ENCODE measurements at regions of chr1 and their contacts with region 1.

Region 1: DNA sequence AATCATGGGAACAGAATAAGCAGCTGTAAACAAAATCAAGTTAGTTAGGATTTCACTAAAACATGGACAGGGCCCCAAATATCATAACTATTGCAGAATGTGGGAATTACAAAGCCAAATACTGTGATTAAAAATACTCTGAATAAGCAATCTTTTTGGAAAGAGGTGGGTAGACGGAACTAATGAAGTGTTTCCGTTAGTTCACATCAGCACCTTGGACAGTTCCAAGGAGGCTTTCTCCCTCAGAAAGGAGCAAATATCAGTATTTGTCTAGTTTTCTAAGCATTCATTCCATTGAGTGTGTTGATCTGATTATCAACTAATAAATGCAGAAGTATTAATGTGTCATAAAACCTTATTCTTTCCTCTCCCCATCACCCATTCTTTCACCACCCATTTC is 97.4 kb downstream of the FAM78B start:
- DNase-seq: no peak
- H3K4me3 ChIP-seq: no peak overlapping the region
- H3K27ac ChIP-seq: no peak overlapping the region
- H3K4me1 ChIP-seq: no peaks in the 10 kb centered on the region
- H3K27me3 ChIP-seq: no peaks in the 10 kb centered on the region
- CTCF ChIP-seq: no peak
- POLR2A ChIP-seq: no peak

Region 2: GRCh38 chr1:165610885-165611284 is 458.5 kb before region 1 on chr1:
- intact Hi-C with region 1: no loop called
- DNase-seq: no peak
- H3K4me3 ChIP-seq: no peak overlapping the region
- H3K27ac ChIP-seq: no peak overlapping the region
- H3K4me1 ChIP-seq: no peaks in the 10 kb centered on the region
- H3K27me3 ChIP-seq: no peaks in the 10 kb centered on the region
- CTCF ChIP-seq: no peak
- POLR2A ChIP-seq: no peak

Region 3: DNA sequence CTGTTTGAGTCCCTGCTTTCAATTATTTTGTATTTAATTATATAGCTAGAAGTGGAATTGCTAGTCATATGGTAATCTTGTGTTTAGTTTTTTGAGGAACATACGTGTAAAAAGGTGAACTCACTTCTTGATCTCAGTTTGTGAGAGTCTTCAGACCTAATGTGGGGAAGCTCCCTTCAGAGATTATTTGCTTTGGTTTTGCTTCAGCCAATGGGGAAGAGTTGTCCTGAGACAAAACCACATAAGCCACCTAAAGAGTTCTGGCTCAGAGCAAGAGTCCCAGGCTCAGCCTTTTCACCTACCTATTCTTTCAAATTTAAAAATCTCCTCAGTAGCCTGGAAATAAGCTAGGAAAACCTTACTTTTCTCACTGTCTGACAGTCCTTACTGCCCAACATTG is 103.5 kb before region 1 on chr1:
- intact Hi-C with region 1: no loop called
- DNase-seq: no peak
- H3K4me3 ChIP-seq: no peak overlapping the region
- H3K27ac ChIP-seq: no peak overlapping the region
- H3K4me1 ChIP-seq: no peaks in the 10 kb centered on the region
- H3K27me3 ChIP-seq: no peaks in the 10 kb centered on the region
- CTCF ChIP-seq: no peak
- POLR2A ChIP-seq: no peak

Region 4: GRCh38 chr1:166040202-166040997 is 29.0 kb before region 1 on chr1:
- intact Hi-C with region 1: no loop called
- DNase-seq: no peak
- H3K4me3 ChIP-seq: no peak overlapping the region
- H3K27ac ChIP-seq: no peak overlapping the region
- H3K4me1 ChIP-seq: no peaks in the 10 kb centered on the region
- H3K27me3 ChIP-seq: no peaks in the 10 kb centered on the region
- CTCF ChIP-seq: no peak
- POLR2A ChIP-seq: no peak

Region 5: DNA sequence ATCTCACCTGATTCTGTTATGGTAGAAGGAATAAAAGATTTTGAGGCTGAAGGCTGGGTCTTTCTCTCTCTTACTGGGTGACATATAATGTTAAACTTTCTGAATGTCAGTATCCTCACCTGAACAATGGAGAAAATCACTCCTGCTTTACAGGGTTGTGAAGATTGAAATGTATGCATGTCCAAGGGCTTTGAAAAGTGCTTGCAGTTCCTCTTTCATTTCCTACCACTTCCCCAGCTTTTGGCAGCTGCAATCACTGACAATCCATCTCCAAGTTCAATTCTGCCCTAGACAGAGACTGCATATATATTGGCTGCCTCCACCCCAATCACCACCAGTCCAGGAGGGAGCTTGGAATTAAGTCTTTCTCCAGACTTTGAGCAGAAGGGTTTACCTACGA is 57.6 kb after region 1 on chr1:
- intact Hi-C with region 1: loop called (anchors 10 kb)
- DNase-seq: no peak
- H3K4me3 ChIP-seq: no peak overlapping the region
- H3K27ac ChIP-seq: no peak overlapping the region
- H3K4me1 ChIP-seq: no peaks in the 10 kb centered on the region
- H3K27me3 ChIP-seq: no peaks in the 10 kb centered on the region
- CTCF ChIP-seq: no peak
- POLR2A ChIP-seq: no peak

Measured in uterus (tissue), 4 donors.